ENCODE measurements at regions of chr5 and their contacts with region 1.

Region 1: GRCh38 chr5:143968011-143968878 is 156.3 kb downstream of the HMHB1 start:
- DNase-seq: peak; percentile 34
- H3K4me3 Mint-ChIP-seq: no peak overlapping the region
- H3K27ac Mint-ChIP-seq: no peak overlapping the region
- H3K4me1 Mint-ChIP-seq: no peaks in the 10 kb centered on the region
- H3K27me3 Mint-ChIP-seq: peaks cover 13% of the 10 kb centered on the region
- CTCF ChIP-seq: peak; percentile 64

Region 2: DNA sequence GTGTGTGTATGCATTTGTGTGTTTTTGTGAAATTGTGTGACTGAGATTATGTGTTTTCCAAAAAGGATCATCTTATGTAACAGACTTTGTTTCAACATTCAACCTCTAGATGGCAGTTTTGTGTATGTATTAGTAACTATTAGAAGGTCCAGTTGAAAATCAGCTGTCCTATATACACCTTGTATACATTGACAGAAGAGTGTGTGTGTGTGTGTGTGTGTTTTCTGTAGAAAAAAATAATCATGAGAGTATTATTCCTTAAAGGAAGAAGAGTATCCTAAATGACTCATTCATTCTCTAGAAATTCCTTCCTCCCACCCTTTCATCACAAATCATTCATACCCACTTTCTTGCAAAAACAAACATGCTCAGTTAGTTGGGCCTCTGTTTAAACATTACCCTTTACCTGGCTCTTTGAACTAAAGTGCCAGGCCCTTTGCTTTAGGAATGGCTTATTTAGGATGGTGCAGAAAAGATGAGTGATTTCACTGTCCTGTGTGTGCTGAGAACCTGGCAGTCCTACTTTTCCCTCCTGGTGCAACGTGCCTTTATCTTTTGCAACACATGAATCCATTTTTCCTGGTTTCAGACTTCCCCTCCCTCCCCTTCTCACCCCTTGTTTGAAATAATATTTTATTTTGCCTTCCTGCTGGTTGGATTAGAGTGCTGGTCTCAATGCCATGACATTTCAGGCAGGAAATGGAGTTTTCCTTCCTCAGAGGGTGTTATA is 1045.9 kb before region 1 on chr5:
- CTCF ChIA-PET with region 1: no interaction called
- intact Hi-C with region 1: loop called (anchors 2 kb)
- DNase-seq: no peak
- H3K4me3 Mint-ChIP-seq: no peak overlapping the region
- H3K27ac Mint-ChIP-seq: no peak overlapping the region
- H3K4me1 Mint-ChIP-seq: peaks cover 63% of the 10 kb centered on the region
- H3K27me3 Mint-ChIP-seq: no peaks in the 10 kb centered on the region
- CTCF ChIP-seq: peak; percentile 1

Region 3: DNA sequence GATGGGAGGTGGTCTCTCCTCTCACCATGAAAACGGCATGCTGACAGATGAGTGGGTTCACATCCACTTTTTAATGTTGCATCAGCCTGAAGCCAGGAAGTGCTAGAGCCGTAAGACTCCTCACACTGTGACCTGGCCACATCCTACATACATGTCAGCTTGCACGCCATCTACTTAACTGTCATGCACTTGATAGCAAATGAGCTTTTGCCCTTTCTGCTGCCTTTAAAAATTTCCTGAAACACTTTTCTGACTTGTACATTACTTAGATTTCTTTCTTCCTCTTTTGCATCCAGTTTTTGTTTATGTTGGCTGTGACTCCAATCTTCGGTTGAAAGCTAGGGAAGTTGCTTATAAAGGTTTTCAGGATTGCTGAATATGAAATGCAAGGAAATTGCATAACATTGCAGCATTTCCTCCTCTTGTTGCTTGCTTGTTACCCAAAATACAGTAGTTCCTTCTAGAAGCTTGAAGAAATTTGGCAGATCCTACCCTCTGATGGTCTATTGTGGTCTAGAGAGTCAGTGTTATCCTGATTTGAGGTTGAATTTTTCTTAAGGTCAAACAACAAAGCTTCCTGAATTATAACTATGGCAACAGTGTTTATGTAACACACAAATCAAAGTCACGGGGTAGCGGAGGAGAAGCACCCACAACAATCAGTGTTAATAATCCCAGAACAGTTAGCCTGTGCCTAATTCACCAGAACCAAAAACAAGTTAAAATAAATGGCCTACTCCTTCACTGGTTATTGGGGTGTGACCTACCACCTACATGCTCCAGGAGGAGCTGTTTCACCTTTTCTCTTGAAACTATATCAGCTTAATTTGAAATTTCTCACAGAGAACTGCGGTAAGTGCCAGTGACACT is 965.6 kb before region 1 on chr5:
- CTCF ChIA-PET with region 1: no interaction called
- intact Hi-C with region 1: loop called (anchors 2 kb)
- DNase-seq: peak; percentile 7
- H3K4me3 Mint-ChIP-seq: no peak overlapping the region
- H3K27ac Mint-ChIP-seq: peak overlapping the region; percentile 56
- H3K4me1 Mint-ChIP-seq: peaks cover 26% of the 10 kb centered on the region
- H3K27me3 Mint-ChIP-seq: no peaks in the 10 kb centered on the region
- CTCF ChIP-seq: no peak

Region 4: GRCh38 chr5:143693651-143694252 is 274.5 kb before region 1 on chr5:
- CTCF ChIA-PET with region 1: no interaction called
- intact Hi-C with region 1: loop called (anchors 10 kb)
- DNase-seq: no peak
- H3K4me3 Mint-ChIP-seq: no peak overlapping the region
- H3K27ac Mint-ChIP-seq: no peak overlapping the region
- H3K4me1 Mint-ChIP-seq: no peaks in the 10 kb centered on the region
- H3K27me3 Mint-ChIP-seq: no peaks in the 10 kb centered on the region
- CTCF ChIP-seq: no peak